Ovary (tissue), 10 donors: ENCODE measurements at regions of chr4 and their contacts with region 1.

Region 1: GRCh38 chr4:154406018-154406795 is 85.4 kb downstream of the DCHS2 start:
- DNase-seq: no peak
- H3K4me3 ChIP-seq: no peak overlapping the region
- H3K27ac ChIP-seq: no peak overlapping the region
- H3K4me1 ChIP-seq: no peaks in the 10 kb centered on the region
- H3K27me3 ChIP-seq: no peaks in the 10 kb centered on the region
- CTCF ChIP-seq: no peak
- EP300 ChIP-seq: no peak
- POLR2A ChIP-seq: no peak

Region 2: DNA sequence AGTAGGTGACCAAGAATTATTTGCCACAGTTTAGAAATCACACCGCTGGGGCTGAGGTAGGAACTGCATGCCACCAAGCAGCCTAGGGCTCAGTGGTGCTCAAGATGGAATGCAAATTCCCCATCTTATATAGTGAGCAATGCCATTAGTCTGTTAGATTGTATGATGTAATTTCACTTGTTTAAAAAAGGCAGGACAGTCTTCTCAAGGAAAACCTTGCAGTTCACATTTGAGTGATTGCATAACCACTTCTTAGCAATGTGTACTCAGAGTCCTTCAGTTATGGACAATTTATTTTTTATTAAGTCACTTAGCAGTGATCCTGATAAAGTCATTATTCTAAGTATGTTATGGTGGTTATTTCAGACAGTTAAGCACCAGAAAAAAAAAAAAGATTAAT is 474.4 kb before region 1 on chr4:
- intact Hi-C with region 1: no loop called
- DNase-seq: no peak
- H3K4me3 ChIP-seq: no peak overlapping the region
- H3K27ac ChIP-seq: no peak overlapping the region
- H3K4me1 ChIP-seq: no peaks in the 10 kb centered on the region
- H3K27me3 ChIP-seq: no peaks in the 10 kb centered on the region
- CTCF ChIP-seq: no peak
- EP300 ChIP-seq: no peak
- POLR2A ChIP-seq: no peak

Region 3: DNA sequence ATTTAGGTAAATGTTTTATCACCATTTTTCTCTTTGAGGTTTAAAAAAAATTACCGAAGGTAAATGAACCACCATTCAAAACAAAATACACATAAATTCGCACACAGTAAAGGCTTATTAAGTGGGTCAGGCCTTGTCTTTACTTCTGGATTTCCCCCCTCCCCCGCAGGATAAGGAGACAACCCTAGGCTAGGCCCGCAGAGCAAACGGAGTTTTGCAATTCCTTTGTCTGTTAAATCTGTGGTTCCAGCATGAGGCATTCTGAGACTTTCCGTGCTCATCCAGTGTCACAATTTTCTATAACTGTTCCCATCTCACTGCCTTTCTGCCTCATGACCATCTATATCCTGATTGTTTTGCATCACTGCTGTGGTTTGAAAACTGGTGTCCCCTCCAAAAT is 222.0 kb before region 1 on chr4:
- intact Hi-C with region 1: no loop called
- DNase-seq: no peak
- H3K4me3 ChIP-seq: no peak overlapping the region
- H3K27ac ChIP-seq: no peak overlapping the region
- H3K4me1 ChIP-seq: no peaks in the 10 kb centered on the region
- H3K27me3 ChIP-seq: no peaks in the 10 kb centered on the region
- CTCF ChIP-seq: no peak
- EP300 ChIP-seq: no peak
- POLR2A ChIP-seq: no peak

Region 4: DNA sequence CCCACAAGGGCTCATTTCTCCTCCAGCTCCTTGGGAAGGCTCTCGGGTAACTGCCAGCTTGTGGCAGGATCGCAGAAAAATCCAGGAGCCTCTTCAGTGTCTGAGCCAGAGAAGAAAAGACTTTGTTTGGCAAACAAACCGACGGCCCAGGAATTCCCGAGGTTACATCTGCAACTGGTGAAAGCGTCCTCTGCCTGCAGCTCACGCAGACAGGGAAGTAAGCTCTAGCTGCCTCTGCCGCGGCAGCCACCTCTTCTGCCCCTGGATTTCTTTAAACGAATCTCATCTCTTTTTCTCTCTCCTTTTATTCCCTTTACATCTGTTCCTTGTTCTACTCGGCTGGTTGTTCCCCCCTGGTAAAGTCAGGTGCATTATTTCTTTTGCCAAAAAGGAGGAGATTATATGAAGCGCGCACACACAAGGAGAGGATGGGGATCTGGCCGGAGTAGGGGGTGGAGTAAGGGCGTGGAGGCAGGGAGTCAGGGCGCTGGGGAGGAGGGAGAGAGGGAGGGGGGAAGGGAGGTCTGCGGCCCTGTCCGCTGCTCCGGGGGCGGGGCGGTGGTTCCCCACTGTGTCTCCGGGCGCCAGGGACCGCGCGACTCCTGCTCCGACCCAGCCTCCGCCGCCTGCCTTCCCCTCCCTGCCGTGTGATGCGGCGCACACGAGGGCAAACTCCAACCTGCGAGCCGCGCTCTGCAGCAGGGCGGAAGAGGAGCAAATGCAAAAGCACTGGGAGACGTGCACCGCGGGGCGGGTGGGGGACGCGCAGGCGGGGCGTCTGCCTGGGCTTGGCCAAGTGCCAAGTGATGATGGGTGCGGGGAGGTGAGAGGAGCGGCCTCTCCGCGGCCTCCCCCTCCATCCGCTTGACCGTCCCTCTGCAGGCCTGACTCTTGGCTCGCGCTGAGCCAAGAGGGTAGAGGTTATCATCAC is 85.4 kb after region 1 on chr4 and contains the start of gene DCHS2:
- intact Hi-C with region 1: loop called in 1 of 4 experiments (anchors 10 kb)
- DNase-seq: peak; percentile 26 to 56 (median 44)
- H3K4me3 ChIP-seq: peak within 1 kb of the TSS; percentile 49
- H3K27ac ChIP-seq: no peak within 1 kb of the TSS
- H3K4me1 ChIP-seq: peaks cover 8% of the 10 kb centered on the region
- H3K27me3 ChIP-seq: no peaks in the 10 kb centered on the region
- CTCF ChIP-seq: no peak
- EP300 ChIP-seq: no peak
- POLR2A ChIP-seq: no peak
- total RNA-seq, gene DCHS2: 1.1 to 8.7 (median 3.9) TPM

Region 5: DNA sequence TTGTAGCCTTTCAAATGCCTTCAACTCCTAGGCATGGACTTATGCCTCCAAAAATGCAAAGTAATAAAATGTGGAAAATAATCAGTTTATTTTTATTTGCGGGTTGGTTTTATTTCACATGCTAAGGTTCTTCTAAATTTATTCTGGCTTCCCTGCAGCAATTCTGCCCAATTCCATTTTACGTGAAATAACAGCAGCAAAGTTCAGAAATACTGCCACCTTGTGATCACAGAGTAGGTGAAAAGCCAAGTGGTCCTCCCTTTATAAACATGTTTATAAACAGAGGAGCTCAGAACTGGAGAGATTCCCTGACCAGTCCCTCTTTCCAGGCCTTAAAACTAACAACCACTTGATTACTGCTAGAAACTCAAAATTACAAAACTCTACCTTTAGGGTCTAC is 100.0 kb after region 1 on chr4:
- intact Hi-C with region 1: loop called in 1 of 4 experiments (anchors 10 kb)
- DNase-seq: no peak
- H3K4me3 ChIP-seq: no peak overlapping the region
- H3K27ac ChIP-seq: no peak overlapping the region
- H3K4me1 ChIP-seq: no peaks in the 10 kb centered on the region
- H3K27me3 ChIP-seq: no peaks in the 10 kb centered on the region
- CTCF ChIP-seq: peak in 1 of 3 donors; percentile 41
- EP300 ChIP-seq: no peak
- POLR2A ChIP-seq: no peak